ENCODE measurements at regions of chr17 and their contacts with region 1.

Region 1: DNA sequence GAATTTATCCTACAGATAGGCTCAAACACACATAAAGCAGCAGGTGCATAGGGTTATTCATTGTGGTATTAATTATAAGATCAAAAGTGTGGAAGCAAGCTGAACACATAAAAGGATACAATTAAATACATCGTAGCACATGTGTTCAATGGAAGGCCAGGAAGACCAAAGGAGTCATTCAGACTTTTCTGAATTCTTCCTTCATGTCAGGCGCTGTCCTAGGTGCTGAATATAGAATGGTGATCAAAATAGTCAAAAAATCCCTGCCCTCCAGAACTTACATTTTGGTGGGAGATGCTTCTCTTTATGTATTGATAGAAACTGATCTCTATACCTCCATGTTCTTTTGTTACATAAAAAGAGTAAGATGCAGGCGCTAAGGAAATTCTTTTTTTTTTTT is 439.0 kb upstream of the ASIC2 start:
- DNase-seq: no peak
- H3K4me3 ChIP-seq: no peak overlapping the region
- H3K27ac ChIP-seq: no peak overlapping the region
- H3K4me1 ChIP-seq: no peaks in the 10 kb centered on the region
- H3K27me3 ChIP-seq: no peaks in the 10 kb centered on the region
- CTCF ChIP-seq: no peak

Region 2: DNA sequence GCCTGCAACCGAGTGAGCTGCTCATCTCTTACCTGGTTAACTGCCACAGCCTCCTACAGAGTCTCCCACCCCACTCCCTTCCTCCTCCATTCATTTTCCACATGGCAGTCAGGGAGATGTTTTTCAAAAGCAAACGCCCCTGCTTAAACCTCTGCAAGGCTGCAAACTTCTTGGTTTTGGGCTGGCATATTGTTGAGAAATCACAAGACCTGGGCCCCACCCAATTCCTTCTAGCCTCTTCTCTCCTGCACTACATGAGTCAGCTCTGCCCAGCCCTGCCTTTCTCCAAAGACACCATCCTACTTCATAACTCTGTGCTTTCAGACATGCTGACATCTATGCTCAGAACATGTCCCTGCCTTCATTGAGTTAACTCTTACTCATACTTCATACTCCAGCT is 604.4 kb before region 1 on chr17:
- CTCF ChIA-PET with region 1: no interaction called
- dilution Hi-C with region 1: loop called (anchors 10 kb)
- in situ Hi-C with region 1: no loop called
- intact Hi-C with region 1: no loop called
- DNase-seq: peak; percentile 92
- H3K4me3 ChIP-seq: no peak overlapping the region
- H3K27ac ChIP-seq: peak overlapping the region; percentile 60
- H3K4me1 ChIP-seq: peaks cover 21% of the 10 kb centered on the region
- H3K27me3 ChIP-seq: no peaks in the 10 kb centered on the region
- CTCF ChIP-seq: no peak

Region 3: GRCh38 chr17:33864758-33865229 is 132.7 kb after region 1 on chr17:
- CTCF ChIA-PET with region 1: no interaction called
- dilution Hi-C with region 1: no loop called
- in situ Hi-C with region 1: no loop called
- intact Hi-C with region 1: no loop called
- DNase-seq: no peak
- H3K4me3 ChIP-seq: no peak overlapping the region
- H3K27ac ChIP-seq: no peak overlapping the region
- H3K4me1 ChIP-seq: no peaks in the 10 kb centered on the region
- H3K27me3 ChIP-seq: no peaks in the 10 kb centered on the region
- CTCF ChIP-seq: no peak